A673 (cell line): ENCODE measurements at regions of chr17 and their contacts with region 1.

Region 1: DNA sequence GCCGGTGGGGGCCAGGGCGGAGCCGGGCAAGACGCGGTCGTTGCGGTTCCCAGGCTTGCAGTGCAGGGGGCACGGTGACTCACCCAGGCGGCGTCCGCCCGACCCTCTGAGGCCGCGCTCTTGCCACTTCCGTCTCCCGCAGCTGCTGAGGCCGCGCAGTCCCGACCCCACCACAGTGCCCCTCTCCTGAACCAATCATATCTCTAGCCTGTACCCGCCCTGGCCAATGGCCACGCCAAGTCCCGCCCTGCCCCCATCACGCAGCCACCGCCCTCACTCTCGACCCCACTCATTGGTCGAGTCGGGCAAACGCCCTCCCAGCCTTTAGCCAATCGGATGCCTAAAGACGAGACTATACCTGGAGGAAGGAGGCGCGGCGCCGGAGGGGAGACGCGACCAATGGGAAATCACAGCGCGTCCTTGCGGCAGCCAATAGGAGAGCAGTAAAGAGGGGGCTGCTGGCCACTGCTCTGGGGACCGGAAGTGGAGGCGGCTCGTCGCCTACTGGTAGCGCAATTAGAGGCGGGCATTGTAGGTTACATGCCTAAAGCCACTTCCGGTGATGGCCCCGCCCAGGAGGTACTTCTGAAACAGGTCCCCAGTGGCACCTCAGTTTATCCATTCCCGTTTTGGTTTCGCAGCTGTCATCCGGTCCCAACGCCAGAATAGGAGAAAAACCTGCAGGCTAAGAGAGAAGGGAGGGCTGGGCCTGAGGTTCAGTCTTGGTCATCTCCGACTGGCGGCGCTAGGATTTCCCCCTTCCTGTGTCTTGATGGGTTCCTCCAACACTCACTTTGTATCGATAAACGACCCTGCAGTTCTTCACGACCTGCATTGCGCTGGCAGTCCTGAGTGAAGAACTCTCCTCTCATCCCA is 3.5 kb upstream of the MTMR4 start:
- DNase-seq: peak; percentile 100
- H3K4me3 ChIP-seq: peak overlapping the region; percentile 78
- H3K27ac ChIP-seq: peak overlapping the region; percentile 91
- H3K4me1 ChIP-seq: peaks cover 20% of the 10 kb centered on the region
- H3K27me3 ChIP-seq: no peaks in the 10 kb centered on the region
- CTCF ChIP-seq: no peak

Region 2: GRCh38 chr17:58463821-58464220 is 54.2 kb before region 1 on chr17:
- CTCF ChIA-PET with region 1: no interaction called
- POLR2A ChIA-PET with region 1: no interaction called
- intact Hi-C with region 1: no loop called
- DNase-seq: no peak
- H3K4me3 ChIP-seq: no peak overlapping the region
- H3K27ac ChIP-seq: no peak overlapping the region
- H3K4me1 ChIP-seq: no peaks in the 10 kb centered on the region
- H3K27me3 ChIP-seq: peaks cover 22% of the 10 kb centered on the region
- CTCF ChIP-seq: no peak

Region 3: DNA sequence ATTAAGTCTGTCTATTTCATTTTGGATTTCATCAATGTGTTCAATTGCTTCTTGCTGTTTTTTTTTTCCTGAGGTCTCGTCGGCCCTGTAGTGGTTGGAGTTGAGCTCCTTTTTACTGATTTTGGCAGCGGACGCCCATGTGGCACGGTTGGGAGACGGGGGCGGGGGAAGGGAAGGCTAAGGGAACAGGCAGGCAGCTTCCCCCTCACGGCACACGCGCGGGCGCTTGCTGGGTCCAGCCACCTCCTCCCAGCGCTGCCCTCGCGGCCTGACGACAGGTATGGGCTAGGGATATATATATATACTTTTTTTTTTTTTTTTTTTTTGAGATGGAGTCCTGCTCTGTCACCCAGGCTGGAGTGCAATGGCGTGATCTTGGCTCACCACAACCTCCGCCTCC is 41.2 kb before region 1 on chr17:
- CTCF ChIA-PET with region 1: no interaction called
- POLR2A ChIA-PET with region 1: no interaction called
- intact Hi-C with region 1: no loop called
- DNase-seq: no peak
- H3K4me3 ChIP-seq: no peak overlapping the region
- H3K27ac ChIP-seq: no peak overlapping the region
- H3K4me1 ChIP-seq: no peaks in the 10 kb centered on the region
- H3K27me3 ChIP-seq: no peaks in the 10 kb centered on the region
- CTCF ChIP-seq: no peak

Region 4: DNA sequence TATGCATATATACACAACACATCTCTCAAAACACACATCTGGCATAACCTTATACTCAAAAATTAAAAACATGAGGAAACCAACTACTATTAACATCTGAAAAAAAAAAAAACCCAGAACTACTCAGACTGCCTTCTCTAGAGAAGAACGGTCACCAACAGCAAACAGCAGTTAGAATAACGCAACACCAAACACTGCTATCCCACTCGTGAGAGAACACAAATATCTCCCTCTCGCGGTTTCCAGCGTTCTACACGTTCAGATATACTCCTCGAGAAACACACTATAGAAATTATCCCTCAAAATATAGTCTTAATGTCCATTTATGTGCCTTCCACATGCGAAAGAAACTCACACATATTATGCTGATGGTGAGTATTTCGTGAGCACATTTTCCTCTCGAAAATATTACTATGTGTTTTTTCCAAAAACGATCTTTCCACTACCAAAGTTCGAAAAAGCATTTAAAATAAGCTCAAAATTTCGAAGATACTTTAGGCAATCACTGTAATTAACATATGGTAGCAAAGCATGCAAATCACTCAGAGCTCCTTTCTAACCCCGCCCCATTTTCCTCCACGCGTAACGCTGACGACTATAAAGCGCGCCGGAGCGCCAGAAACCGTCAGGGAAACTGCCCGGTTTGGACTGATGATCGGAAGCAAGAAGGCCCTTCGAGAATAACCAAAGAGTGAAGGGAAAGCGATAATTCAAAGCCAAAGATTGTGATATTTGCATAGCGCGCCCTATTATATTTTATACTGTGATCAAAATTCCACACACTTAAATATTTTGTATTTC is 113.8 kb after region 1 on chr17:
- CTCF ChIA-PET with region 1: interaction called, 4 read pairs
- POLR2A ChIA-PET with region 1: interaction called, 3 read pairs
- intact Hi-C with region 1: loop called (anchors 2 kb)
- DNase-seq: peak; percentile 98
- H3K4me3 ChIP-seq: peak overlapping the region; percentile 35
- H3K27ac ChIP-seq: peak overlapping the region; percentile 97
- H3K4me1 ChIP-seq: peaks cover 7% of the 10 kb centered on the region
- H3K27me3 ChIP-seq: no peaks in the 10 kb centered on the region
- CTCF ChIP-seq: peak; percentile 40

Region 5: DNA sequence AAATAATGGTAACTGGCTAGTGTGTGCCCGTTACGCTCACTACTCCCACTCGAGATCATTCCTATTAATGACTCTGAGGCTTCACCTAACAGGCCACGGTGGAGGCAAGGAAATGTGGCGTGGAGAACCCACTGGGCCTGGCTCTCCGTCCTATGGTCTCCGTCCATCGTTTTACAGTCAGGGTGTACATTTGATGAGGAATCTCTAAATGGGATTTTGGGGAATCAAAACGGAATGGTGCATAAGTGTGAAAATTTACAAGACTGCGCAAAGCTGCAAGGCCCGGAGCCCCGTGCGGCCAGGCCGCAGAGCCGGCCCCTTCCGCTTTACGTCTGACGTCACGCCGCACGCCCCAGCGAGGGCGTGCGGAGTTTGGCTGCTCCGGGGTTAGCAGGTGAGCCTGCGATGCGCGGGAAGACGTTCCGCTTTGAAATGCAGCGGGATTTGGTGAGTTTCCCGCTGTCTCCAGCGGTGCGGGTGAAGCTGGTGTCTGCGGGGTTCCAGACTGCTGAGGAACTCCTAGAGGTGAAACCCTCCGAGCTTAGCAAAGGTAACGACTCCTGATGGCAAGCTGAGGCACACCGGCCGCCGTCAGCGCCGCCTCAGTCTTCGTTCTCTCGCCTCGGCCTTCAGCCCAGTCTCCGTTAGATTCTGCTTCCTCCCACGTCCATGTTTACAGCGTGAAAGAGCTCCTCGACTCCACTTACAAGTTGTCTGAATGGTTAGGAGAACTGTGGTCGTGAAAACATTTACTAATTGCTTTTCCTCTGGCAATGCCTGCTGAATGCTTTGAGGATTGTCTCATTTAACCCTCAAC is 174.5 kb after region 1 on chr17 and contains the start of gene RAD51C:
- CTCF ChIA-PET with region 1: no interaction called
- POLR2A ChIA-PET with region 1: no interaction called
- intact Hi-C with region 1: loop called (anchors 10 kb)
- DNase-seq: peak; percentile 92
- H3K4me3 ChIP-seq: peak within 1 kb of the TSS; percentile 60
- H3K27ac ChIP-seq: peak within 1 kb of the TSS; percentile 87
- H3K4me1 ChIP-seq: peaks cover 6% of the 10 kb centered on the region
- H3K27me3 ChIP-seq: no peaks in the 10 kb centered on the region
- CTCF ChIP-seq: no peak
- total RNA-seq, gene RAD51C: 79.8 and 80.4 TPM in 2 replicates

Region 6: GRCh38 chr17:59004338-59005111 is 486.6 kb after region 1 on chr17:
- CTCF ChIA-PET with region 1: interaction called, 4 read pairs
- POLR2A ChIA-PET with region 1: no interaction called
- intact Hi-C with region 1: loop called (anchors 2 kb)
- DNase-seq: peak; percentile 75
- H3K4me3 ChIP-seq: no peak overlapping the region
- H3K27ac ChIP-seq: peak overlapping the region; percentile 25
- H3K4me1 ChIP-seq: peaks cover 25% of the 10 kb centered on the region
- H3K27me3 ChIP-seq: no peaks in the 10 kb centered on the region
- CTCF ChIP-seq: peak; percentile 94

Region 7: GRCh38 chr17:59155439-59156182 is 637.6 kb after region 1 on chr17 and contains the start of gene PRR11:
- CTCF ChIA-PET with region 1: no interaction called
- POLR2A ChIA-PET with region 1: no interaction called
- intact Hi-C with region 1: loop called (anchors 10 kb)
- DNase-seq: peak; percentile 100
- H3K4me3 ChIP-seq: peak within 1 kb of the TSS; percentile 62
- H3K27ac ChIP-seq: peak within 1 kb of the TSS; percentile 97
- H3K4me1 ChIP-seq: peaks cover 41% of the 10 kb centered on the region
- H3K27me3 ChIP-seq: no peaks in the 10 kb centered on the region
- CTCF ChIP-seq: no peak
- total RNA-seq, gene PRR11: 123 and 130 TPM in 2 replicates